Activated B cell treated with CpG ODN at 0.5 μM for 24 hours (primary cell): ENCODE measurements at regions of chr1 and their contacts with region 1.

Region 1: GRCh38 chr1:149886396-149887195 is 12.8 kb upstream of the BOLA1 start:
- DNase-seq: peak; percentile 74
- ATAC-seq: peak; percentile 69
- H3K4me3 Mint-ChIP-seq: no peak overlapping the region
- H3K27ac Mint-ChIP-seq: no peak overlapping the region
- H3K4me1 Mint-ChIP-seq: peaks cover 2% of the 10 kb centered on the region
- H3K27me3 Mint-ChIP-seq: no peaks in the 10 kb centered on the region
- CTCF ChIP-seq: no peak

Region 2: GRCh38 chr1:149844101-149844500 is 42.5 kb before region 1 on chr1:
- CTCF ChIA-PET with region 1: interaction called, 3 read pairs
- POLR2A ChIA-PET with region 1: interaction called, 311 read pairs
- intact Hi-C with region 1: no loop called
- DNase-seq: no peak
- ATAC-seq: no peak
- H3K4me3 Mint-ChIP-seq: peak overlapping the region; percentile 85
- H3K27ac Mint-ChIP-seq: peak overlapping the region; percentile 85
- H3K4me1 Mint-ChIP-seq: peaks cover 51% of the 10 kb centered on the region
- H3K27me3 Mint-ChIP-seq: no peaks in the 10 kb centered on the region
- CTCF ChIP-seq: no peak

Region 3: GRCh38 chr1:149927503-149928387 is 41.1 kb after region 1 on chr1 and contains the start of gene SF3B4:
- CTCF ChIA-PET with region 1: interaction called, 3 read pairs
- POLR2A ChIA-PET with region 1: interaction called, 122 read pairs
- intact Hi-C with region 1: loop called (anchors 1 kb)
- DNase-seq: peak; percentile 94
- ATAC-seq: peak; percentile 96
- H3K4me3 Mint-ChIP-seq: peak within 1 kb of the TSS; percentile 98
- H3K27ac Mint-ChIP-seq: peak within 1 kb of the TSS; percentile 95
- H3K4me1 Mint-ChIP-seq: peaks cover 36% of the 10 kb centered on the region
- H3K27me3 Mint-ChIP-seq: peaks cover 12% of the 10 kb centered on the region
- CTCF ChIP-seq: no peak
- total RNA-seq, gene SF3B4: 80.8 and 86.2 TPM in 2 replicates

Region 4: GRCh38 chr1:150010393-150011115 is 124.0 kb after region 1 on chr1 and contains the start of gene OTUD7B:
- CTCF ChIA-PET with region 1: no interaction called
- POLR2A ChIA-PET with region 1: interaction called, 20 read pairs
- intact Hi-C with region 1: no loop called
- DNase-seq: peak; percentile 67
- ATAC-seq: peak; percentile 89
- H3K4me3 Mint-ChIP-seq: peak within 1 kb of the TSS; percentile 93
- H3K27ac Mint-ChIP-seq: peak within 1 kb of the TSS; percentile 68
- H3K4me1 Mint-ChIP-seq: peaks cover 15% of the 10 kb centered on the region
- H3K27me3 Mint-ChIP-seq: peaks cover 47% of the 10 kb centered on the region
- CTCF ChIP-seq: no peak
- total RNA-seq, gene OTUD7B: 4.3 and 4.8 TPM in 2 replicates

Region 5: GRCh38 chr1:150149271-150150132 is 262.9 kb after region 1 on chr1 and contains the start of gene PLEKHO1:
- CTCF ChIA-PET with region 1: no interaction called
- POLR2A ChIA-PET with region 1: interaction called, 33 read pairs
- intact Hi-C with region 1: no loop called
- DNase-seq: peak; percentile 76
- ATAC-seq: peak; percentile 80
- H3K4me3 Mint-ChIP-seq: peak within 1 kb of the TSS; percentile 97
- H3K27ac Mint-ChIP-seq: peak within 1 kb of the TSS; percentile 96
- H3K4me1 Mint-ChIP-seq: peaks cover 72% of the 10 kb centered on the region
- H3K27me3 Mint-ChIP-seq: no peaks in the 10 kb centered on the region
- CTCF ChIP-seq: no peak
- total RNA-seq, gene PLEKHO1: 195 and 208 TPM in 2 replicates

Region 6: DNA sequence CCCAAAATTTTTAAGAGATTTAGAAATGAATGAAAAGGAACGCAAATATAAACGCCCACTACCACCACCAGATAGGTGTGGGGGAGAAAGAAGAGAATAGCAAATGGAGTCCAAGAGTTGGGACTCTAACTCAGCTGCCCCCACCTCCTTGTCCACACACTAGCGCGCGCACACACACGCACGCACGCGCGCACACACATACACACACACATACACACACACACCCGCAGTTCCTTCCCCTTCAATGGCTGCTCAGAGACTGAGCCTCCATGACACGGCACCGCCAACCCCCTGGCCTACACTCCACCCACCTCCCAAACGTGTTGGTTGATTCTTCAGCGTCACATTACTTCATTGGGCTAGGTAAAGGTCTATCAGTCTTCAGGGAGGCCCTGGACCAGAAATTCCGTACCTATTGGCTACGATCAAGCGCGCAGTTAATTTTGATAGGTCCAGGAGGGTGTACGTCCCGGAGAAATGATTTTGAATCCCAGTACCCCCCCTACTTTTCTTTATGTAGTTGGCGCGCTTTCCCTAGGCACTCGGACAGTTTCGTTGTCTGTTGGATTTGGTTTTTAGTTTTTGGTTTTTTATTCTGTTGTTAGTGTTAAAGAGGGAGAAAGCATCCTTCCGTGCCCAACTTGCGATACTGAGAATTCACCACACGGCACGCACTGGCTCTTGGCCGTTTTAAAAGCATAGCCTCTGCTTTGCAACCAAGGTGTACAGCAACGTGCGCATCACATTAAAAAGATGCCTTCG is 349.4 kb after region 1 on chr1 and contains the start of gene ANP32E:
- CTCF ChIA-PET with region 1: no interaction called
- POLR2A ChIA-PET with region 1: interaction called, 28 read pairs
- intact Hi-C with region 1: loop called (anchors 1 kb)
- DNase-seq: peak; percentile 82
- ATAC-seq: peak; percentile 88
- H3K4me3 Mint-ChIP-seq: no peak within 1 kb of the TSS
- H3K27ac Mint-ChIP-seq: no peak within 1 kb of the TSS
- H3K4me1 Mint-ChIP-seq: peaks cover 22% of the 10 kb centered on the region
- H3K27me3 Mint-ChIP-seq: peaks cover 2% of the 10 kb centered on the region
- CTCF ChIP-seq: no peak
- total RNA-seq, gene ANP32E: 70.5 and 84.3 TPM in 2 replicates